Dendritic cell treated with granulocyte-macrophage colony-stimulating factor and Interleukin-4, amounts not matched to agents 40 ng/mL and 50 ng/mL, for 4 days (primary cell): ENCODE measurements at regions of chr4 and their contacts with region 1.

Region 1: DNA sequence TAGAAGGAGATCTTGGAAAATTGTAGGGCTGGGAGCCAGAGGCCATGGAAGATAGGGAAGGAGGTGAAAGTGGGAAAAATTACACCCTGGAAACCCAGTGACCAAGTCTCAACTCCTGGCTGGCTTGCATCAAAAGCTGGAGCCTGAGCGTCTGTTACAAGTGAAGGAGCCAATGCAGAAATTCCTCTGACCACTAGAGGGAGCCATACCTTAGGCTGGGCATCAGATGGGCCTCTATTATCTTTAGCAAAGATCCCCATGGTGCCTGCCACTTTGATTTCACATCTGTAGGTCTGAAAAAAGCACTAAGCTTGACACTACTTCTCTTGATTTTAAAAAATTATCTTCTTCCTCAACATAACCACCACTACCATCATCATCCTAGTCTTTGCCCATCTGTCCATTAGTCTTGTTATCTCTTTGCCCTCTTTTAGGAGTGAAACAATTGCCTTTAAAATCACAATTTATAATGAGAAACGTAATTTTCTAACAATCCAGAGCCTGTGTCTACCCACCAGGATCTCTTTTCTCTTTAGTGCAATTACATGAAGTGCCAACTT is 62.9 kb downstream of the ANAPC4 start:
- H3K4me3 Mint-ChIP-seq: no peak overlapping the region
- H3K27ac Mint-ChIP-seq: no peak overlapping the region
- H3K4me1 Mint-ChIP-seq: no peaks in the 10 kb centered on the region
- H3K27me3 Mint-ChIP-seq: peaks cover 3% of the 10 kb centered on the region

Region 2: DNA sequence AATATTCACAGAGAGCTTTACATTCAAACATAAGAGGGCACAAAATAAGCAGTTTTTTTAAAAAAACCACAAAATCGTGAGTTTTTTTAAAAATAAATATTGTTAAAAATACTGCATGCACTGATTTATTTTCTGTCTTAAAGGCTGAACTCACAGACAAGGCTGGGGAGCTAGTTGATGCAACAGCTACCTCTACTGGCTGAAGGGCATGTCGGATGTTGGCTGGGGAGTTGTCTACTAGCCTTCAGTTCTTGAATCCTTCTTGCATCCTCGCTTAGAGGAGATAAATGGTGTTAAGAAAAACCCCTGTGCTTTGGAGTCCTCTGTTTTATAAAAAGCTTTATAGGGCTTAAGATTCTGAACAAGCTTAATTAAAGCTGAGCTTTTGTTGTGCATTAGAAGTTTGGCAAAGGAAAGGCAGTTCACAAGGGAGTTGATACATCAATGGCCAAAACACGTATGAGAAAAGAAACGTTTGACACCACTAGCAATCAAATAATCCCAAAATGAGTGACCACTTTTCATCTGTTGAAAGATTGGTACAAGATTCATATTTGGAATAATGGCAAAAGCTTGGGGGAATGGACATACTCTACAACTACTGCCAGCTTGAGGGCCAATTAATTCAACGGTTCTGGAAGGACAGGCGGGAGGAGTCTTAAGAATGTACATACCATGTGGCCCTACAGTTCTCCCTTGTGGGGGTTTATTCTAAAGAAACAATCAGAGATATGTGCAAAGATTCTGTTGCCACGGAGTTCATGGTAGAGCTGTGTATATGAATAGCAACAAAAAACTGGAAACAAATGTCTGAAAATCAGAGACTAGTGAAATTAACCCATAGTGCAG is 328.1 kb after region 1 on chr4:
- intact Hi-C with region 1: loop called (anchors 1 kb)
- H3K4me3 Mint-ChIP-seq: no peak overlapping the region
- H3K27ac Mint-ChIP-seq: no peak overlapping the region
- H3K4me1 Mint-ChIP-seq: peaks cover 7% of the 10 kb centered on the region
- H3K27me3 Mint-ChIP-seq: no peaks in the 10 kb centered on the region